Activated CD4-positive, alpha-beta memory T cell treated with anti-CD3 and anti-CD28 coated beads, Interleukin-2, amount 10 ng/mL, durations not matched to agents 7 days and 5 days (primary cell): ENCODE measurements at regions of chr14 and their contacts with region 1.

Region 1: GRCh38 chr14:74860906-74861733 is 14.8 kb downstream of the PROX2 start:
- DNase-seq: peak; percentile 91
- H3K4me3 Mint-ChIP-seq: no peak overlapping the region
- H3K27ac Mint-ChIP-seq: no peak overlapping the region
- H3K4me1 Mint-ChIP-seq: peaks cover under 1% of the 10 kb centered on the region
- H3K27me3 Mint-ChIP-seq: no peaks in the 10 kb centered on the region

Region 2: GRCh38 chr14:74875941-74876913 is 15.1 kb after region 1 on chr14 and contains the start of gene PROX2:
- CTCF ChIA-PET with region 1: interaction called, 115 read pairs
- POLR2A ChIA-PET with region 1: interaction called, 42 read pairs
- DNase-seq: peak; percentile 24
- H3K4me3 Mint-ChIP-seq: no peak within 1 kb of the TSS
- H3K27ac Mint-ChIP-seq: peak within 1 kb of the TSS; percentile 7
- H3K4me1 Mint-ChIP-seq: peaks cover 32% of the 10 kb centered on the region
- H3K27me3 Mint-ChIP-seq: no peaks in the 10 kb centered on the region
- total RNA-seq, gene PROX2: not detected

Region 3: GRCh38 chr14:74888164-74889158 is 27.3 kb after region 1 on chr14:
- CTCF ChIA-PET with region 1: interaction called, 38 read pairs
- POLR2A ChIA-PET with region 1: interaction called, 42 read pairs
- DNase-seq: no peak
- H3K4me3 Mint-ChIP-seq: no peak overlapping the region
- H3K27ac Mint-ChIP-seq: peak overlapping the region; percentile 44
- H3K4me1 Mint-ChIP-seq: peaks cover 53% of the 10 kb centered on the region
- H3K27me3 Mint-ChIP-seq: no peaks in the 10 kb centered on the region

Region 4: DNA sequence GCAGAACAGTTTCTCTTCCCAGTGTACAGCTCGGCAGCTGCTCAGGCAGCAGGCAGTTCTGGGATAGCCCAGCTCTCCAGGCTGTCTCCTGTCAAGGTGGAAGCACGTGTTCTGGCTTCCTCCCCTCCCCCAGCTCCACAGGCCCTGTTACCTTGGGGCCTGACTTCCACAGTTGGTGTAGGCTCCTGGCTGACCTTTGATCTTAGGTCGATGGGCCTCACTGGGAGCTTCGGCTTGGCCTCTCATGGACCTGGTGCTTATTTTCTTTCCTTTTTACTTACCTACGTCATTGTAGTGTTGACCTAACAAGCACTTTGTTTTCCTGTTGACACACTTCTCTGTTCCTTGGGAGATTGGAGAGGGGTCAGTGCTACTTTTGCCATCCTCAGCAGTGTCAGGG is 37.6 kb after region 1 on chr14:
- CTCF ChIA-PET with region 1: interaction called, 285 read pairs
- POLR2A ChIA-PET with region 1: no interaction called
- DNase-seq: no peak
- H3K4me3 Mint-ChIP-seq: no peak overlapping the region
- H3K27ac Mint-ChIP-seq: no peak overlapping the region
- H3K4me1 Mint-ChIP-seq: no peaks in the 10 kb centered on the region
- H3K27me3 Mint-ChIP-seq: no peaks in the 10 kb centered on the region

Region 5: GRCh38 chr14:74932401-74932901 is 71.3 kb after region 1 on chr14:
- CTCF ChIA-PET with region 1: no interaction called
- POLR2A ChIA-PET with region 1: no interaction called
- DNase-seq: no peak
- H3K4me3 Mint-ChIP-seq: no peak overlapping the region
- H3K27ac Mint-ChIP-seq: no peak overlapping the region
- H3K4me1 Mint-ChIP-seq: peaks cover 22% of the 10 kb centered on the region
- H3K27me3 Mint-ChIP-seq: peaks cover 20% of the 10 kb centered on the region

Region 6: DNA sequence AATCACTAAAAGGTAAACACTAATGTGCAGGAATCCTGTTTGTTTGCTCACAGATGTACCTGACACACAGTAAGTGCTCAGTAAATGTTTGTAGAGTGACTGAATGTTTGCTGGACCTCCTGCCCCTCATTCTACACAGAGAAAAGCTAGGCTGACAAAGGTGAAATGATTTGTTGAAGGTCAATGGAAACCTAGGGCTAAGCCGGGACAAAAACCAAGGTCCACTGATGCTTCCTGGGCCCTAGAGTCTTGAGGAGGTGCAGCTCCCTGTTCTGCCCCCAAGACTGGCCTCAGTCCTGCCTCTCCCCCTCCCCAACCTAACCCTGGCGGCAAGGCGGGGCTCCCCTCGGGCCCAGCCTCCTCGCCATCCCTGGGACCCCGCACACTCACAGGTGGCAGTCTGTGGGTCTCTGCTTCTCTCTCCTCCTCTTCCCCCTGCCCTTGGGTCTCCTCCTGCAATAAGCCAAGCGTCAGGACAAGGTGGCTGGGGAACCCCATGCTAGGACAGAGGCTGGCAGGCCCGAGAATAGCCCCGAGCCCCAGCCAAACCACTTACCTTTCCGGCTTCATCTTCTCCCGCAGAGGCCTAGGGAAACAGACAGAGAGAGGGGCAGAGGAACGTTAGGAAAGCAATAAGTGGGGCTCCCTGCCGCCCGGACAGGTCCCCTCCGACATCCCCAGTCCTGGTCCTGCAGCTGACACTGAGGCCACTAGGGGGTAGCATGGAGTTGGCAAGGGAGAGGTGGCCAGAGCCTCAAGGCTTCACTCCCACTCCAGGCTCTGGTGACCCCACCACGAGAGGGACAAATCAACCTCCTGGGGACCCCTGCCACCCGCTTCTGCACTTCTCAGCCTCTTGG is 84.9 kb after region 1 on chr14:
- CTCF ChIA-PET with region 1: interaction called, 12 read pairs
- POLR2A ChIA-PET with region 1: interaction called, 7 read pairs
- DNase-seq: peak; percentile 79
- H3K4me3 Mint-ChIP-seq: peak overlapping the region; percentile 2
- H3K27ac Mint-ChIP-seq: no peak overlapping the region
- H3K4me1 Mint-ChIP-seq: peaks cover 33% of the 10 kb centered on the region
- H3K27me3 Mint-ChIP-seq: no peaks in the 10 kb centered on the region